ENCODE measurements at regions of chr3 and their contacts with region 1.

Region 1: GRCh38 chr3:27312044-27312668 is 57.0 kb downstream of the NEK10 start:
- DNase-seq: no peak
- H3K4me3 ChIP-seq: no peak overlapping the region
- H3K27ac ChIP-seq: no peak overlapping the region
- H3K4me1 ChIP-seq: peaks cover 0 to 30% (median 16%) of the 10 kb centered on the region in 4 donors
- H3K27me3 ChIP-seq: no peaks in the 10 kb centered on the region
- CTCF ChIP-seq: peak; percentile 81 to 89 (median 86)
- EP300 ChIP-seq: no peak
- POLR2A ChIP-seq: no peak

Region 2: DNA sequence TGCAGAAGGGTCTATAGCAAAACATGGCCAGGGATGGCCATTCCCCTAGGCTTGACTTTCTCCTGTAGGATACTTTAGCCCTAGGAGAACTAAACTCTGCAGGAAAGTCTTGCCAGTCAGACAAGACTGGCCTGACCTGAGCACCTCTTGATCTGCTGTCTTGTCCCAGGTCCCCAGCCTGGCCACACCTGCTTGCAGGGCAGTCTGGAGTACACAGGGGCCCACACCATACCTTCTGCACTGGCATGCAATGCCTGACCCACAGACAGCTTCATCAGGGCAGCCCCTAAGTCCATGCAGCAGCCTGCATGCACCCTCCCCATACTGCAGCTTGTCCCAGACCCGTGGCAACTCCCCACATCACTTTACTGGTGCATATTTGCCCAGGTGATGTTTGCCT is 485.0 kb before region 1 on chr3:
- intact Hi-C with region 1: no loop called
- DNase-seq: no peak
- H3K4me3 ChIP-seq: no peak overlapping the region
- H3K27ac ChIP-seq: no peak overlapping the region
- H3K4me1 ChIP-seq: no peaks in the 10 kb centered on the region
- H3K27me3 ChIP-seq: no peaks in the 10 kb centered on the region
- CTCF ChIP-seq: no peak
- EP300 ChIP-seq: no peak
- POLR2A ChIP-seq: no peak

Region 3: GRCh38 chr3:27467545-27467944 is 155.4 kb after region 1 on chr3:
- intact Hi-C with region 1: loop called (anchors 2 kb)
- DNase-seq: no peak
- H3K4me3 ChIP-seq: no peak overlapping the region
- H3K27ac ChIP-seq: no peak overlapping the region
- H3K4me1 ChIP-seq: peaks cover 5 to 33% (median 23%) of the 10 kb centered on the region in 4 donors
- H3K27me3 ChIP-seq: no peaks in the 10 kb centered on the region
- CTCF ChIP-seq: peak; percentile 56 to 64 (median 63)
- EP300 ChIP-seq: no peak
- POLR2A ChIP-seq: no peak

Region 4: GRCh38 chr3:27681245-27681748 is 369.1 kb after region 1 on chr3:
- intact Hi-C with region 1: loop called (anchors 5 kb)
- DNase-seq: no peak
- H3K4me3 ChIP-seq: peak overlapping the region in 2 of 4 donors; percentile 35
- H3K27ac ChIP-seq: no peak overlapping the region
- H3K4me1 ChIP-seq: peaks cover 0 to 20% (median 10%) of the 10 kb centered on the region in 4 donors
- H3K27me3 ChIP-seq: no peaks in the 10 kb centered on the region
- CTCF ChIP-seq: peak; percentile 52 to 62 (median 60)
- EP300 ChIP-seq: no peak
- POLR2A ChIP-seq: no peak

Measured in esophagus muscularis mucosa (tissue), 4 donors.